ENCODE measurements at regions of chr12 and their contacts with region 1.

Region 1: GRCh38 chr12:32761716-32762115 is 6.0 kb upstream of the YARS2 start:
- DNase-seq: no peak
- ATAC-seq: no peak
- H3K4me3 ChIP-seq: no peak overlapping the region
- H3K27ac ChIP-seq: no peak overlapping the region
- H3K4me1 ChIP-seq: no peaks in the 10 kb centered on the region
- H3K27me3 ChIP-seq: peaks cover 0 to 2% (median 0%) of the 10 kb centered on the region in 3 donors
- CTCF ChIP-seq: no peak
- POLR2A ChIP-seq: no peak

Region 2: DNA sequence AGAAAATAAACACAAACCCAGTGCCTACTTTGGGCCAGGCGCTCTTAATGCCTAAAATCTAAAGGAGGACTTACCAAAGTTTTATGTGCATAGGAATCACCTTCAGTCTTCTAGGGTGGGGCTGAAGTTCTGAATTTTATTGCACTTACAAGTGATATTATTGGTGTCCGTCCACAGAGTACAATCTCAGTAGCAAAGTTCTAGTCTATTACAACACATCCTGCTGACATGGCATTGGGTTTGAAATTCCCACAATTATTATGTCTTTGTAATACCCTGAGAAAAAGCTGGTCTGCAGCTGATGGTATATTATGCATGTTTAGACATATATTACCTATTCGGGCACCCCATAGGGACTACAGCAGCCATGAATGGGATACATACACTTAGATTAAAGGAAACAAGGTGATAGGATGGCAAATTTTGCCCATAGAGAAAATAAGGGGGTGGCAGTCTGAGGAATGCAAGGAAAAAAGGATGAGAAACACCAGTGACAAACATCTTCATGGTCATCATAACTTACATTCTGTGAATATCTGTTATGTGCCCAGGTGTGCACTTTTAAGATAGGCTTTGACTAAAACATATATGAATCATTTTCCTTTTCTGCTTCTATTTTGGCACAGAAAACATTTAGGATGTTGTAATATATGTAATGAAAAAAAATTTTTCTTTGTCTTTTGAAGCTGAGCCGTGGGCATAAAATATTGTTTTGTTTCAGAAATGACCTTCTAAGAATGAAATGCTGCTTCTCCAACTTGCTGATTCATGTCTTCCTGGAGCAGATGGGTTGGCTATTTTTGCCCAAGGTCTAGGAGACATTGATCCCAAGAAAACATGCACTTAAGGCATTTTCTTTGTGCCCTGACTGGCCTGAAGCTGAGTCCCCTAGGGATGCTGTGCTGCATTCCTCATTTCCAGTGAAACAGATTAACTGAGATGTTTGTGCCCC is 1233.4 kb after region 1 on chr12:
- in situ Hi-C with region 1: loop called in 1 of 4 experiments (anchors 10 kb)
- intact Hi-C with region 1: no loop called
- DNase-seq: no peak
- ATAC-seq: no peak
- H3K4me3 ChIP-seq: no peak overlapping the region
- H3K27ac ChIP-seq: no peak overlapping the region
- H3K4me1 ChIP-seq: no peaks in the 10 kb centered on the region
- H3K27me3 ChIP-seq: no peaks in the 10 kb centered on the region
- CTCF ChIP-seq: no peak
- POLR2A ChIP-seq: no peak

Measured in gastrocnemius medialis (tissue), 4 donors.